Heart right ventricle (tissue), 16 donors: ENCODE measurements at regions of chr3 and their contacts with region 1.

Region 1: DNA sequence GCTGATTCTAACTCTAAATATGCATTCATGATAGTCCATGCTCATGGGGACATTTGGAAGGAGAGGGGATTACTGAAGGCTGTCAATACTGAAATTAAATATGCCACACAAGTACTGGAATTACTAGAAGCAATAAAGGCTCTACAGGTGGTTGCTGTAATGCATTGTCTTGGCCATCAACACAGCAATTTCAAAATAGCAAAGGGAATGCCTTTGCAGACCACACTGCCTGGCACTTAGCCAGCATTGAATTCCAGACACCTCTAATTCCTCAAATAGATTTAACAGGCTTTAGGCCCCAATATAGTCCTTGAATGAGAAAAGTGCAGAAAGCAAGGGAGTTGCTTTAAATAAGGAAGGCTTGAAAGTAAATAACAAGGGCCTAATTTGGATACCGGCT is 115.8 kb upstream of the PLCL2 start:
- DNase-seq: no peak
- ATAC-seq: peak in 1 of 8 donors; percentile 18
- H3K4me3 ChIP-seq: no peak overlapping the region
- H3K27ac ChIP-seq: peak overlapping the region; percentile 40 to 90 (median 75)
- H3K4me1 ChIP-seq: peaks cover 0 to 43% (median 22%) of the 10 kb centered on the region in 9 donors
- H3K27me3 ChIP-seq: no peaks in the 10 kb centered on the region
- CTCF ChIP-seq: no peak

Region 2: DNA sequence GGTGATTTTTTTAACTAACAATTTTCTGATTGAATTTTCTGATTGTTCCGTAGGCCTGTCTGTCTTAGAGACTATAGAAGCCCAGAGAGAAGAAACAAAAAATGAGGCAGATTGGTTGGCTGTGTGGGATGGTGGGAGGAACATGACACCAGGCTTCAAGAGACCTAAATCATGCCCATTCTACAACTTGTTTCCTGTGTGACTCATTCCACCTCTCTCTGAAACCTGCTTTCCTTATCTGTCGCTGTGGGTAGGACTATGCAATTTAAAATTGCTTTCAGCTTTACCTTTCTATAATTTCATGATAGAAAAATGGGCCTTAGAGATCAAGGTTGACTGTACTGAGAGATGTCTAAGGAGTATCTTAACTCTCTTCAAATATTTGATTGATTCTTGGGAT is 459.4 kb before region 1 on chr3:
- intact Hi-C with region 1: no loop called
- DNase-seq: no peak
- ATAC-seq: no peak
- H3K4me3 ChIP-seq: no peak overlapping the region
- H3K27ac ChIP-seq: peak overlapping the region in 1 of 10 donors; percentile 29
- H3K4me1 ChIP-seq: peaks cover 5 to 46% (median 19%) of the 10 kb centered on the region in 9 donors
- H3K27me3 ChIP-seq: no peaks in the 10 kb centered on the region
- CTCF ChIP-seq: no peak

Region 3: DNA sequence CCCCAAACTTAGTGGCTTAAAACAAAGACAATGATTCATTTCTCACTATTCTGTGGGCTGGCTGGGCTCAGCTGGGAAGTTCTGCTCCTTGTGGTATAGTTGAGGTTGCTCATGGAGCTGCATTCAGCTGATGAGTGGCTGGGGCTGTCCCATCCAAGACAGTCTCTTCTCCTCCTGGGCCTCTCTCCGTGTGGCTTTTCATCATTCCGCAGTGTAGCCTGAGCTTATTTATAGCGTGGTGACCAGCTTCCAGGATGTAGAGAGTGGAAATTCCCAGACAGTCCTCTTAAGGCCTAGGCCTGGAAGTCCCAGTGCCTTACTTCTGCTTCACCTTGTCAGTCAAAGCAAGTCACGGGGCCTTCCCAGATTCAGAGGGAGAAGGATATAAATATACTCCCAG is 27.1 kb before region 1 on chr3:
- intact Hi-C with region 1: loop called in 1 of 10 experiments (anchors 2 kb)
- DNase-seq: peak; percentile 13 to 53
- ATAC-seq: peak; percentile 72 to 100 (median 98)
- H3K4me3 ChIP-seq: no peak overlapping the region
- H3K27ac ChIP-seq: peak overlapping the region in 9 of 10 donors; percentile 30 to 78 (median 56)
- H3K4me1 ChIP-seq: peaks cover 0 to 15% (median 6%) of the 10 kb centered on the region in 9 donors
- H3K27me3 ChIP-seq: no peaks in the 10 kb centered on the region
- CTCF ChIP-seq: no peak